ENCODE measurements at regions of chr22 and their contacts with region 1.

Region 1: DNA sequence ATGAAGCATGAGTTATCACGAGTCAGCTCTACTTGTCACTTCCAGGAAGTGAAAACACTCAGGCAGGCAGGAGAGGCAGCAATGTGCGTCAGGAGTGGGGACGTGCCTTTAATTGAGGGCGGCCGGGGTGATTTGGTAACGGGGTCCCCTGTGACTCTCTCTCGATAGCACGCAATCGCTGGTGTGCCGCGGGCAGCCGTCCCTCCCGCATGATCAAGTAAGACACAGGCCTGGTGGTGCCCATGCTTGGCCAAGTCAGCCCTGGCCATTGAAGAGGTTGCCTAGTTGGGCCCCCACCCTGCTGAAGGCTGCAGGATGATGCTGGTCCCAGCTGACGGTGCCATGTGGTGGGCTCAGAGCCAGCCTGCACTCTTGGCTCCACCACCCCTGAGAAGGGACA is 29.7 kb downstream of the CACNG2 start:
- DNase-seq: no peak
- ATAC-seq: no peak

Region 2: GRCh38 chr22:36636916-36637315 is 36.9 kb before region 1 on chr22:
- intact Hi-C with region 1: loop called (anchors 2 kb)
- DNase-seq: no peak
- ATAC-seq: no peak

Region 3: GRCh38 chr22:37148742-37149665 is 475.2 kb after region 1 on chr22:
- intact Hi-C with region 1: no loop called
- DNase-seq: no peak
- ATAC-seq: peak; percentile 10